Mammary epithelial cell (primary cell): ENCODE measurements at regions of chr6 and their contacts with region 1.

Region 1: GRCh38 chr6:87237804-87238203 is 82.4 kb downstream of the ZNF292 start:
- DNase-seq: no peak
- H3K4me3 ChIP-seq: no peak overlapping the region
- H3K27ac ChIP-seq: no peak overlapping the region
- H3K4me1 ChIP-seq: no peaks in the 10 kb centered on the region
- H3K27me3 ChIP-seq: no peaks in the 10 kb centered on the region
- CTCF ChIP-seq: peak; percentile 52 to 72

Region 2: DNA sequence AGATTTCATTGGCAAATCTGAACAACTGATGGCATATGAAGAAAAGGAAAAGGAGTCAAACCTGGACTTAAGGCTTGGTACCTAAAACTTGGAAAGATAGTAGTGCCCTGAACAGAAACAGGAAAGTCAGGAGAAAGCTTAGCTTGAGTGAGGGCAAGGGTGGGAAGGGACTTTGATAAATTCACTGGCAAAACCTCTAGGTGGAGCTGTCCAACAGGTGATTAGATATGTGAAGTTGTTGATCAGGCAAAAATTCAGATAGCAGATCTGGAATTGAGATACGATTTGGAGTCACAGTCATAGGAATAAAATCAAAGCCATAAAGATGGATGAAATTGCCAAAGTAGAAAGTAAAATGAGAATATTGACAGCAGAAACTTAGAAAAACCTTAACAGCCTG is 98.6 kb before region 1 on chr6:
- CTCF ChIA-PET with region 1: no interaction called
- dilution Hi-C with region 1: no loop called
- in situ Hi-C with region 1: loop called (anchors 5 to 25 kb)
- intact Hi-C with region 1: loop called (anchors 1 kb)
- DNase-seq: peak; percentile 40
- H3K4me3 ChIP-seq: no peak overlapping the region
- H3K27ac ChIP-seq: no peak overlapping the region
- H3K4me1 ChIP-seq: no peaks in the 10 kb centered on the region
- H3K27me3 ChIP-seq: no peaks in the 10 kb centered on the region
- CTCF ChIP-seq: peak; percentile 70 to 76

Region 3: GRCh38 chr6:87154993-87155841 is 82.6 kb before region 1 on chr6 and contains the start of gene ZNF292:
- CTCF ChIA-PET with region 1: no interaction called
- dilution Hi-C with region 1: no loop called
- in situ Hi-C with region 1: no loop called
- intact Hi-C with region 1: loop called (anchors 5 kb)
- DNase-seq: peak; percentile 99
- H3K4me3 ChIP-seq: peak within 1 kb of the TSS; percentile 69 to 94 (median 87)
- H3K27ac ChIP-seq: peak within 1 kb of the TSS; percentile 97
- H3K4me1 ChIP-seq: peaks cover 25% of the 10 kb centered on the region
- H3K27me3 ChIP-seq: no peaks in the 10 kb centered on the region
- CTCF ChIP-seq: no peak
- total RNA-seq, gene ZNF292: 27.1 to 27.5 TPM